ENCODE measurements at regions of chr3 and their contacts with region 1.

Region 1: GRCh38 chr3:51995346-51996163 is at the start of gene RPL29:
- DNase-seq: peak; percentile 94
- ATAC-seq: peak; percentile 95
- H3K4me3 Mint-ChIP-seq: peak within 1 kb of the TSS; percentile 97
- H3K27ac Mint-ChIP-seq: peak within 1 kb of the TSS; percentile 97
- H3K4me1 Mint-ChIP-seq: peaks cover 42% of the 10 kb centered on the region
- H3K27me3 Mint-ChIP-seq: peaks cover 13% of the 10 kb centered on the region
- total RNA-seq, gene RPL29: 1,042 to 1,060 TPM

Region 2: GRCh38 chr3:51934139-51934850 is 61.3 kb before region 1 on chr3:
- CTCF ChIA-PET with region 1: no interaction called
- DNase-seq: no peak
- ATAC-seq: no peak
- H3K4me3 Mint-ChIP-seq: no peak overlapping the region
- H3K27ac Mint-ChIP-seq: no peak overlapping the region
- H3K4me1 Mint-ChIP-seq: peaks cover 15% of the 10 kb centered on the region
- H3K27me3 Mint-ChIP-seq: no peaks in the 10 kb centered on the region

Region 3: DNA sequence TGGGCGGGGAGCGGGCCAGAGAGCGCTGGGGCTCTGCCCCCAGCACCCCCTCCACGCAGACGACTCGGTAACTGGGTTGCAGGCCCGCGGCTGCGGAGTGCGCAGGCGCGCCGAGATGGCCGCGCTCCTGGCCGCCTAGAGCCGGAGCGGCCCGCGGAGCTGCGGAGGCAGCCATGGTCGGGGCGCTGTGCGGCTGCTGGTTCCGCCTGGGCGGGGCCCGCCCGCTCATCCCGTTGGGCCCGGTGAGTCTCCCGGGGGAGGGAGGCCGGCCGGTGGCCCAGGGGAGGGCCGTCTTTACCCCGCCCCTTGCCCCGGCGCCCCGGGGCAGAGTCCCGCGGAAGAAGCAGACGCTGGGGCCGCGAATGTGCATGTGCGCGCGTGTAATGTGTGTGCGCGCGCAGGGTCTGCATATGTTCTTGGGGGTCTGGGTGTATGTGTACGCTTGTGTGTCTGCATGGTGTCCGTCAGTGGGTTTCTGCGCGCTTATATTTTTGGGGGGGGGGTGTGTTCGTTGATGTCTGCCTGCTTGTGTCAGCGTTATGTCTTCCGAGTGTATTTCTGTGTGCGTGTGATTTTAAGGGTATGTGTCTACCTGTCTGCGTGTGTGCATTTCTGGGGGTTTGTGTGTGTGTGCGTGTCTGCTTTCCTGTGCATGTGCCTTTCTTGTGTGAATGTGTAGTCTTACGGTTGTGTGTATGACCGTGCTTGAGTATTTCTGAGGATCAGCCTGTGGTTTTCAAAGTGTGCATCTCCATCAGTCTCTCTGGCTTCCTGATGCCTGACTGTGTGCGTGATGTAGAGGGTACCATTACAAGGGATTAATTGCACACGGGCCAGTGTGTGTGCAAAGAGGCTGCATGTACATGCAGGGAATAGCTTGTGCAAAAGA is 20.3 kb before region 1 on chr3 and contains the start of gene ABHD14A:
- CTCF ChIA-PET with region 1: interaction called, 16 read pairs
- DNase-seq: peak; percentile 77
- ATAC-seq: peak; percentile 83
- H3K4me3 Mint-ChIP-seq: peak within 1 kb of the TSS; percentile 98
- H3K27ac Mint-ChIP-seq: peak within 1 kb of the TSS; percentile 92
- H3K4me1 Mint-ChIP-seq: peaks cover 30% of the 10 kb centered on the region
- H3K27me3 Mint-ChIP-seq: no peaks in the 10 kb centered on the region
- total RNA-seq, gene ABHD14A: 11.8 to 13.7 TPM

Region 4: GRCh38 chr3:51982782-51983577 is 12.6 kb before region 1 on chr3 and contains the start of gene ACY1:
- CTCF ChIA-PET with region 1: interaction called, 34 read pairs
- DNase-seq: peak; percentile 83
- ATAC-seq: peak; percentile 85
- H3K4me3 Mint-ChIP-seq: peak within 1 kb of the TSS; percentile 98
- H3K27ac Mint-ChIP-seq: peak within 1 kb of the TSS; percentile 88
- H3K4me1 Mint-ChIP-seq: peaks cover 29% of the 10 kb centered on the region
- H3K27me3 Mint-ChIP-seq: no peaks in the 10 kb centered on the region
- total RNA-seq, gene ACY1: 18.1 to 21.3 TPM

Region 5: DNA sequence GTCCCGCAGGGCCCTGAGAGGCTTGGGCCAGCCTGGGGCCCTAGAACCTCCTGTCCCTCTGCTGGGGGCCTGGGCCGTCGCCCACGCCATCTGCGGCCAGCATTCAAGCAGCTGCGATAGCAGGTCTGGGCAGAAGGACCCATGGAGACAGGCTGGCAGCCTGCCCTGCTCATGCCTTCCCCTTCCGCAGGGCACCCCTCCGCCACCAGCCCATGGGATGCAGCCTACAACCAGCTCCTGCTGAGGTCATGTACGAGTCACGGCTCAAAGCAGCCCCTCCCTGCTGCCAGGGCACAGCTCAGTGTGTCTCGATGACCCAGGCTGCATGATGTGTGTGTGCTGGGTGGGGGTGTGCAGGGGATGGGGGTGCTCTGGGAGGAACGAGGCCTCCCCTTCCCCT is 33.0 kb after region 1 on chr3:
- CTCF ChIA-PET with region 1: no interaction called
- DNase-seq: no peak
- ATAC-seq: no peak
- H3K4me3 Mint-ChIP-seq: no peak overlapping the region
- H3K27ac Mint-ChIP-seq: no peak overlapping the region
- H3K4me1 Mint-ChIP-seq: no peaks in the 10 kb centered on the region
- H3K27me3 Mint-ChIP-seq: no peaks in the 10 kb centered on the region

Measured in activated CD8-positive, alpha-beta memory T cell treated with anti-CD3 and anti-CD28 coated beads, Interleukin-2, amount 10 ng/mL, durations not matched to agents 7 days and 5 days (primary cell).